Dendritic cell treated with granulocyte-macrophage colony-stimulating factor and Interleukin-4, amounts not matched to agents 40 ng/mL and 50 ng/mL, for 4 days (primary cell): ENCODE measurements at regions of chr9 and their contacts with region 1.

Region 1: DNA sequence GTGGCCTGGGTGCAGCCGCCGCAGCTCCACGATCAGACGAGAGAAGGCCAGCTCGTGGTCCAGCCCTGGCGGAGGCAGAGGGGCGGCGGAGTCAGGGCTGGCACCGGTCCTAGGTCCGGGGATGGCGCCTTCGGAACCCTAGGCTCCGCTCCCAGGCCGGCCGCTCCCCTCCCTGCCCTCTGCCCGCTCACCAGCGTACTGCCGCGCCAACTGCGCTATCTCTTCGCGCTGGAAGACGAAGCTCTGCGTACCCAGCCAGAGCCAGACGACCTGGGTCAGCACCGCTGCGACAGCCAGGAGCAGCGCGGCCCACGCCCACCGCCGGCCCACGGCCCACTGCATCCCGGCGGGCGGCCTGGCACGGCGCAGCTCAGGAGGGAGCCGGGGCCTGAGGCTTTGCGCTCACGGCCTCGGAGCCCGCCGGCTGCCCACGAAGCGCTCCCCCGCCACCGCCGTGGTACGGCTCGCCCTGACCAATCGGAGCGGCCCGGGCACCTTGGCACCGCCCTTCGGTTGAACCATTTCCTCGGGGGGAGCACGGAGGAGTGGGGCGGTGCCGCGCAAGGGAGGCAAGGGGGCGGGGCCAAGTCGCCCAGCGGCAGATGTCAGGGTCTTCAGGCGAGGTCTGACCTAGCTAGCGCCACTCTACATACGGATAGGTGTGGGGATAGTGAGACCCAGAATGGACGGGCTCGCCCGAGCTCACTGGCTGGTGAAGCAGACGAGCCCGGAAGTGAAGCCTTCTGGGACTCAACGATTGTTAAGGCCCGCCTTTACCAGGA is at the start of gene SIGMAR1:
- H3K4me3 Mint-ChIP-seq: peak within 1 kb of the TSS; percentile 91
- H3K27ac Mint-ChIP-seq: peak within 1 kb of the TSS; percentile 98
- H3K4me1 Mint-ChIP-seq: peaks cover 39% of the 10 kb centered on the region
- H3K27me3 Mint-ChIP-seq: peaks cover 2% of the 10 kb centered on the region

Region 2: DNA sequence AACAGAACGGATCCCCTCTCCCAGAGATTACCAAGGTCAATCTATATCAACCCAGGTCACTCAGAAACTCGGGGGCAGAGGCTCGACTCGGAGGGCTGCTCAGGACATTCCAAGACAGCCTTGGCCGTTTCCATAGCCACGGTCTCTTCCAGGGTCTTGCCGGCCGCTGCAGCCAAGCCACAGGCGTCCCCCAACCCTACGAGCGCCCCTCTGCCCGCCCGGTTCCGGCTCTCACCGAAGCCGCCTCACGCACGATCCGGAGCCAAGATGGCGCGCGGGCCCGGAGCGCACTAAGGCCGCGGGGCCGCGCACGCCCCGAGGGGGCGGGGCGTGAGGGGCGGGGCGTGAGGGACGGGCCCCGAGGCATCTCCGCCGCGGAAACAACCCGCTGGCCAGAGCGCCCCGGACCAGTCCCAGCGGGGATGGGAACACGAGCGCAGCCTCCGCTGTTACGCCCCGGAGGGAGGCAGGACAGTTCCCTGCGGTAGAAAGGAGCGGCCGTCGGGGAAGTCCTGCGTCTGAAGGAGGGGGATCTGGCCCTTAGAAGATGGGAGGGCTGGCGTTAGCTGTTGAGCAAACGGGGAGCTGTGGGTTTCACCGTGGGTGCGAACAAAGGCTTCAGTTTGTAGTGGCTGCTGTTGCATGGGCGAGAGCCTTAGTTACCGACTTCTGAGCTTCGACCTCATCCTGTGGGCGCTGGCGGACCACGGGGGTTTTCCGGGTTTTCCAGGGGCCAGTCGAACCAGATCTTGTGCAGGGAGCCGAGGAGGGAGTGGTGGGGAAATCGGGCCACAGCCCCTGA is 25.5 kb before region 1 on chr9 and contains the start of gene RPP25L:
- intact Hi-C with region 1: loop called (anchors 1 kb)
- H3K4me3 Mint-ChIP-seq: peak within 1 kb of the TSS; percentile 86
- H3K27ac Mint-ChIP-seq: peak within 1 kb of the TSS; percentile 94
- H3K4me1 Mint-ChIP-seq: peaks cover 33% of the 10 kb centered on the region
- H3K27me3 Mint-ChIP-seq: no peaks in the 10 kb centered on the region